MCF 10A (cell line): ENCODE measurements at regions of chr7 and their contacts with region 1.

Region 1: GRCh38 chr7:44847508-44847920 is 373 bp downstream of the H2AZ2 start:
- DNase-seq: peak; percentile 81
- H3K4me3 Mint-ChIP-seq: peak overlapping the region; percentile 87
- H3K27ac Mint-ChIP-seq: peak overlapping the region; percentile 90
- H3K4me1 Mint-ChIP-seq: peaks cover 12% of the 10 kb centered on the region
- H3K27me3 Mint-ChIP-seq: no peaks in the 10 kb centered on the region
- CTCF ChIP-seq: peak; percentile 92

Region 2: DNA sequence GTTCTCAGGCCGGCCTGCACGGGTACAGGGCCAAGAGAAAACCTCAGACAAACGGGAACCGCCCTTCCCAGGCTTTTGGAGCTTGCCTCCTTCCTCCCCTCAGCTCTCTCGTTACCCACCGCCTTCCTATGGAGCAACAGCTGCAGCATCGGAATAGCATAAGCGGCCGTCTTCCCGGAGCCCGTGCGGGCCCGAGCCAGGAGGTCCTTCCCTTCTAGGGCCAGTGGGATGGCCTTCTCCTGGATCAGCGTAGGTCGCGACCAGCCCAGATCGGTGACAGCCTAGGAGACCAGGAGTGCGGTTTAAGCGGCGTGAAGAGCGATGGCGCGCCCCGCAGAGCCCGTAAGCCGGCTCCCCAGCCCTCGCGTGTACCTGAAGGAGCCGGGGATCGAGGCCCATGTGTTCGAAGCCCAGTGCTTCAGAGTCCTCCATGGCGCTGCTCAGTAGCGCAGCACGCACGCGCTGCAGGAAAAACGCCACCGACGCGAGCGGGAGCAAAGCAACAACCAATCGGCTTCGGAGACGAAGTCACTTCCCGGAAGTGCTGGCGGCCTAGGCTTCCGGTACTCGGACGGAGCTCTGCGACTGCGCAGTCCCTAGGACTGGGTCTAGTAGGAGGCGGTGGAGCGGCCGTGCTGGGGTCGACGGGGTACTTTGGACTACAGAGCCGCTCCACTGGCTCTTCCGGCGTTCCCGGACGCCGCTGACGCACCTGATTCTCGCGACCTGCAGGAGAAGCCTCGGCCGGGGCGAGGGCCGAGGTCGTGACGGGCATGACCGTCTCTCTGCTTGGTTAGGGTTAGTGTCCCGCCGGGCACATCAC is 273.8 kb before region 1 on chr7 and contains the start of gene DDX56:
- CTCF ChIA-PET with region 1: no interaction called
- POLR2A ChIA-PET with region 1: interaction called, 23 read pairs
- intact Hi-C with region 1: no loop called
- DNase-seq: peak; percentile 94
- H3K4me3 Mint-ChIP-seq: peak within 1 kb of the TSS; percentile 98
- H3K27ac Mint-ChIP-seq: peak within 1 kb of the TSS; percentile 95
- H3K4me1 Mint-ChIP-seq: peaks cover 21% of the 10 kb centered on the region
- H3K27me3 Mint-ChIP-seq: no peaks in the 10 kb centered on the region
- CTCF ChIP-seq: no peak
- total RNA-seq, gene DDX56: 104 and 105 TPM in 2 replicates

Region 3: GRCh38 chr7:44606450-44607254 is 240.9 kb before region 1 on chr7 and contains the start of gene OGDH:
- CTCF ChIA-PET with region 1: interaction called, 4 read pairs
- POLR2A ChIA-PET with region 1: interaction called, 34 read pairs
- intact Hi-C with region 1: no loop called
- DNase-seq: peak; percentile 98
- H3K4me3 Mint-ChIP-seq: peak within 1 kb of the TSS; percentile 97
- H3K27ac Mint-ChIP-seq: peak within 1 kb of the TSS; percentile 99
- H3K4me1 Mint-ChIP-seq: peaks cover 9% of the 10 kb centered on the region
- H3K27me3 Mint-ChIP-seq: no peaks in the 10 kb centered on the region
- CTCF ChIP-seq: no peak
- total RNA-seq, gene OGDH: 75.1 and 91.1 TPM in 2 replicates

Region 4: GRCh38 chr7:44629829-44630522 is 217.5 kb before region 1 on chr7:
- CTCF ChIA-PET with region 1: no interaction called
- POLR2A ChIA-PET with region 1: no interaction called
- intact Hi-C with region 1: no loop called
- DNase-seq: no peak
- H3K4me3 Mint-ChIP-seq: no peak overlapping the region
- H3K27ac Mint-ChIP-seq: no peak overlapping the region
- H3K4me1 Mint-ChIP-seq: peaks cover 22% of the 10 kb centered on the region
- H3K27me3 Mint-ChIP-seq: no peaks in the 10 kb centered on the region
- CTCF ChIP-seq: no peak

Region 5: GRCh38 chr7:44769776-44770662 is 77.5 kb before region 1 on chr7:
- CTCF ChIA-PET with region 1: no interaction called
- POLR2A ChIA-PET with region 1: no interaction called
- intact Hi-C with region 1: loop called (anchors 5 kb)
- DNase-seq: peak; percentile 39
- H3K4me3 Mint-ChIP-seq: peak overlapping the region; percentile 38
- H3K27ac Mint-ChIP-seq: peak overlapping the region; percentile 20
- H3K4me1 Mint-ChIP-seq: peaks cover 27% of the 10 kb centered on the region
- H3K27me3 Mint-ChIP-seq: no peaks in the 10 kb centered on the region
- CTCF ChIP-seq: no peak

Region 6: DNA sequence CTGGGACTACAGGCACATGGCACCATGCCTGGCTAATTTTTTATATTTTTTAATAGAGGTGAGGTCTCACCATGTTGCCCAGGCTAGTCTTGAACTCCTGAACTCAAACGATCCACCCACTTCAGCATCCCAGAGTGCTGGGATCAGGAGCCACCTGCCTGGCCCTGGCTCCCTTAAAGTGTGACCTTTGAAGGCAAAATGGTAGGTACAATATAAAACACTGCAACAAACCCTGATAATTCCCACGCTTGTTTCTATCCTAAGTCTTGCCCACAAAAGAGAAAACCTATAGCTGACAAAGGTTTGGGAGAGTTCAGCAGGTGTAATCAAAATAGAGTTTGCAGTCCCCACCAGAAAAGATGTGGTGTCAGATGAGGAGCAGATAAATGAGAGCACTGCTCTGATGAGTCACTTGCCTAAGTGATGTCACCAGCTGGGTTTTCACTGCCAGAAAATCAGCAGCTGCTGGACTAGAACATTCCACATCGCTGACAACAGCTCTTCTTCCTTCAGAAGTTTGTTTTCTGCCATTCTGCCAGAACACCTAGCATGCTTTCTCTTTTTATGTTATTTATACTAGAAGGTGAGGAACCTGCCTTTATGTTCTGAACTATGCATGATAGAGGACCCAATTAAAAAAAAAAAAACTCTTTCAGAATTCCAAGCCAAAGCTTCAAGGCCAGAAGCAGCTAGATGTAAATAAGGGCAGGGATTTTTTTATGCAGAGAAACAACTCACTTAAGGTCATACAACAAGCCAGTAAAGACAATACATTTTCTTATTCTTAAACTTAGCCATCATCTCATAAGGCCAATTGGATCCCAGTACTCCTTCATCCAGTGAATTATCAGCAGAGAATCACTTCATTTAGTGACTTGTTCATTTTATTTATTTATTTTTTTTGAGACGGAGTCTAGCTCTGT is 19.8 kb after region 1 on chr7:
- CTCF ChIA-PET with region 1: interaction called, 4 read pairs
- POLR2A ChIA-PET with region 1: interaction called, 21 read pairs
- intact Hi-C with region 1: no loop called
- DNase-seq: peak; percentile 76
- H3K4me3 Mint-ChIP-seq: no peak overlapping the region
- H3K27ac Mint-ChIP-seq: peak overlapping the region; percentile 73
- H3K4me1 Mint-ChIP-seq: peaks cover 6% of the 10 kb centered on the region
- H3K27me3 Mint-ChIP-seq: no peaks in the 10 kb centered on the region
- CTCF ChIP-seq: no peak

Region 7: GRCh38 chr7:45033261-45033930 is 185.9 kb after region 1 on chr7:
- CTCF ChIA-PET with region 1: interaction called, 3 read pairs
- POLR2A ChIA-PET with region 1: interaction called, 14 read pairs
- intact Hi-C with region 1: no loop called
- DNase-seq: peak; percentile 50
- H3K4me3 Mint-ChIP-seq: no peak overlapping the region
- H3K27ac Mint-ChIP-seq: peak overlapping the region; percentile 90
- H3K4me1 Mint-ChIP-seq: peaks cover 33% of the 10 kb centered on the region
- H3K27me3 Mint-ChIP-seq: no peaks in the 10 kb centered on the region
- CTCF ChIP-seq: no peak

Region 8: DNA sequence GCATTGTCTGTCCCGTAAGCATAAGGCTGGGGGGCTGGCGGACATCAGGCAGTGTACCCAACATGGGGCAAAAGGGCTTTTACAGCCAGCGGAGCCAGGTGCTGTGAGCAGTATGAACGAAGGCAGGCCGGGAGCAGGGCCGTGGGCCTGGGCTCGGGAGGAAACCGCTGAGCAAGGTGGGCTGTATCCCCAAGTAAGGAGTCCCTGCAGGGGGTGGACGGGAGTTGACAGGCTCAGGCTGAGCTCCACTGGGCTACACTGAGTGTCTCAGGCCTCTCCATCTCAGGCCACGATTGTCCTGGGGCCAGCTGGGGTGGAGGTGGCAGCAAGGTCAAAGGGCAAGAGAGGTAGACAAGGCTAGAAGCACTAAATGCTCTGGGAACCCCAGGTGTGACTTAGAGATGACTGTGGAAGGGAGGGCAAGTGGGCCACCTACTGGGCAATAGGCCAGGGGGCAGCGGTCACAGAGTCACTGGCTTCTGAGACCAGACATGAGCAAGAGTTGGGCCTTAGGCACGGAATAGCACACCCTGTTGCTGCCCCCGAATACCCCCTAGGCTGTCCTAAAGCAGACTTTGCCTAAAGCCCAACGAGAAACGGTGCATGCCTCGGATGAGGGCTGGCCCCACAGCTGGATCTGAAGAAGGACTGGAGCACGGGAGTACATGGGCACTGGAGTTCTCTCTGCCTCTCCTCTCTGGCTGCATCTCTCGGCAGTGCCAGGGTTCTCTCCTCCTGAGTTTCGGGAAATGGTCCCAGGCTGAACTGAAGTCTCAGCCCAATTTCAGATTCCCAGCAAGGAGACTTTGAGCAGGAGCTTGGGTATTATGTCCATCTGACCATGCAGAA is 299.2 kb after region 1 on chr7:
- CTCF ChIA-PET with region 1: no interaction called
- POLR2A ChIA-PET with region 1: no interaction called
- intact Hi-C with region 1: no loop called
- DNase-seq: no peak
- H3K4me3 Mint-ChIP-seq: no peak overlapping the region
- H3K27ac Mint-ChIP-seq: no peak overlapping the region
- H3K4me1 Mint-ChIP-seq: no peaks in the 10 kb centered on the region
- H3K27me3 Mint-ChIP-seq: peaks cover 42% of the 10 kb centered on the region
- CTCF ChIP-seq: no peak